Sciatic nerve (tissue), 2 donors: ENCODE measurements at regions of chr1 and their contacts with region 1.

Region 1: GRCh38 chr1:1959840-1960479 is 40.9 kb upstream of the TMEM52 start:
- DNase-seq: peak; percentile 87
- ATAC-seq: peak; percentile 82

Region 2: DNA sequence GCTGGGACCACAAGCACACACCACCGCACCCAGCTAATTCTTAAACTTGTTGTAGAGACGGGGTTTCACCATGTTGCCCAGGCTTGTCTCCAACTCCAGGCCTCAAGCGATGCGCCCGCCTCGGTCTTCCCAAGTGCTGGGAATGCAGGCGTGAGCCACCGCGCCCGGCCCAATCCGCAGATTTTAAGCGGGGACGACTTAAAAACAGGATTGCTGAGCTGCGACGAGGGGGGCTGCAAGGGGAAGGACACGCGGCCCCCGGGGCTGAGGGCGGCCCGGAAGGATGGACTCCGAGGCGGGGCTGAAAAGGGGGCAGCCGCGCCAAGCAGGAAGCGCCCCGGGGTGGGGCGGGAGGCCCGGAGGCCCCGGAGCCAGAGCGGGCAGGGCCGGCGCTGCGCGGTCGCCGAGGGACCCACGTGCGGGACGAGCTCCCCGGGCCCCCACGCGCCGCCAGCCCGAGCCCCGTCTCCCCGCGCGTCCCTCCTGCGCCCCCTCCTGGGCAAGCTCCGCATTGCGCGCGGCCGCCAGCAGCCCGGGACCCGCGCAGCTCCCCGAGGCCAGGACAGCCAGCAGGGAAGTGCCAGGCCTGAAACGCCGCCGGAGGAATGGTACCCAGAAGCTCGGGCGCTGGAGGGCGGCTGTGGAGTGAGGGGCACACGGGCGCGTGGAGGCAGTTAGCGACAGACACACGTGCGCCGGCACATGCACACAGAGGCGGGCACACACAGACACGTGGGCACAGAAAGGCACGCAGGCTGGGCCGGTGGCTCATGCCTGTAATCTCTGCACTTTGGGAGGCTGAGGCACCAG is 84.8 kb after region 1 on chr1:
- intact Hi-C with region 1: loop called (anchors 10 kb)
- DNase-seq: peak; percentile 79
- ATAC-seq: peak; percentile 70